ENCODE measurements at regions of chr16 and their contacts with region 1.

Region 1: DNA sequence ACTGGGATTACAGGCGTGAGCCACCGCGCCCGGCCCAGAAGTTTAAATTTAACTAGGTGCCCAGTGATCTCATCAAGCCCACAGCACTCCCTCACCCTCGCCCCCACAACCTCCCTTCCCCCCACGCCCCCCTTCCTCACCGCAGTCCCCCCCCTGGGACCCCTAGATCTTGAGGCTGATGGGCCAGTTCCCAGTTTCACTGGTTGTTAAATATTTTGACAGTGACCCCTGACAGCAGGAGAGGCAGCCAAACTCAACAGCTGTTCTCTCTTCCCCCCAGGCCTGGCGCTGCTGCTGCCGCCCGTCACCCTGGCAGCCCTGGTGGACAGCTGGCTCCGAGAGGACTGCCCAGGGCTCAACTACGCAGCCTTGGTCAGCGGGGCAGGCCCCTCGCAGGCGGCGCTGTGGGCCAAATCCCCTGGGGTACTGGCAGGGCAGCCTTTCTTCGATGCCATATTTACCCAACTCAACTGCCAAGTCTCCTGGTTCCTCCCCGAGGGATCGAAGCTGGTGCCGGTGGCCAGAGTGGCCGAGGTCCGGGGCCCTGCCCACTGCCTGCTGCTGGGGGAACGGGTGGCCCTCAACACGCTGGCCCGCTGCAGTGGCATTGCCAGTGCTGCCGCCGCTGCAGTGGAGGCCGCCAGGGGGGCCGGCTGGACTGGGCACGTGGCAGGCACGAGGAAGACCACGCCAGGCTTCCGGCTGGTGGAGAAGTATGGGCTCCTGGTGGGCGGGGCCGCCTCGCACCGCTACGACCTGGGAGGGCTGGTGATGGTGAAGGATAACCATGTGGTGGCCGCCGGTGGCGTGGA is 15.6 kb downstream of the QPRT start:
- DNase-seq: peak; percentile 78

Region 2: DNA sequence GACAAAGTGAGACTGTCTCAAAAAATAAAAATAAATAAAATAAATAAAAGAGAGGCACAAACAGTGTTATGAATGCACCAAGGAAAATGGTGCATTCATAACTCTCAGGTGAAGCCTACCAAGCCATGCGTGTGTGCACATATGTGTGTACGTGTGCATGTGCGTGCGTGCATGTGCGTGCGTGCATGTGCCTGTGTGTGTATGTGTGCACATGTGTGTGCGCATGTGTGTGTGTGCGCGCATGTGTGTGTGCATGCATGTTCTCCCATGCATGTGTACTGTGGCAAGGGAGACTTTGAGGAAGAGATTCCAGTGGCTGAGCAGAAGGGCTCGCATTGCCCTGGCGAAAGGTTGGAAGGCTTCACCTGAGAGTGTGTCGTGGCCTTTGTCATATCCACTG is 26.8 kb before region 1 on chr16:
- intact Hi-C with region 1: loop called in 1 of 2 experiments (anchors 1 kb)
- DNase-seq: no peak

Region 3: DNA sequence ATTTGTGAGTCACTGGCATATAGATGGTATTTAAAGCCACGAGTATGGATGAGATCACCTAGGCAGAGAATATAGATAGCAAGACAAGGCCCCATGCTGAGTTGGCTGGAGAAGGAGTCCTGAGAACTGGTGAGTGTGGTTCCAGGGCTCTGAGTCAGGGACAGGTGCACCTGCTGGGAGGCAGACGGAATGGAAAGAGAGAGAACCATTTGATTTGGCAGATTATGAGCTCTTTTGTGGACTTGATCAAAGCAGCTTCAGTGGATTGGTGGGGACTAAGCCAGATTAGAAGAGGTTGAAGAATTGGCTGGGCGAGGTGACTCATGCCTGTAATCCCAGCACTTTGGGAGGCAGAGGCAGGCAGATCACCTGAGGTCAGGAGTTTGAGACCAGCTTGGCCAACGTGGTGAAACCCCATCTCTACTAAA is 324.2 kb after region 1 on chr16:
- intact Hi-C with region 1: loop called (anchors 5 kb)
- DNase-seq: no peak

Region 4: GRCh38 chr16:30024451-30024850 is 329.9 kb after region 1 on chr16:
- intact Hi-C with region 1: loop called (anchors 5 kb)
- DNase-seq: no peak

Measured in posterior vena cava (tissue), 2 donors.